A549 (cell line): ENCODE measurements at regions of chr7 and their contacts with region 1.

Region 1: GRCh38 chr7:134954197-134955082 is 31.9 kb upstream of the AGBL3 start:
- DNase-seq: peak; percentile 22 to 51
- ATAC-seq: peak in 1 of 2 experiments; percentile 66; a peak in 2 of 6 replicates
- H3K4me3 ChIP-seq: no peak overlapping the region
- H3K27ac ChIP-seq: no peak overlapping the region; a peak in 1 of 6 replicates
- H3K4me1 ChIP-seq: no peaks in the 10 kb centered on the region
- CTCF ChIP-seq: peak; percentile 86
- EP300 ChIP-seq: no peak
- POLR2A ChIP-seq: no peak
- RAD21 ChIP-seq: peak; percentile 83 to 87

Region 2: DNA sequence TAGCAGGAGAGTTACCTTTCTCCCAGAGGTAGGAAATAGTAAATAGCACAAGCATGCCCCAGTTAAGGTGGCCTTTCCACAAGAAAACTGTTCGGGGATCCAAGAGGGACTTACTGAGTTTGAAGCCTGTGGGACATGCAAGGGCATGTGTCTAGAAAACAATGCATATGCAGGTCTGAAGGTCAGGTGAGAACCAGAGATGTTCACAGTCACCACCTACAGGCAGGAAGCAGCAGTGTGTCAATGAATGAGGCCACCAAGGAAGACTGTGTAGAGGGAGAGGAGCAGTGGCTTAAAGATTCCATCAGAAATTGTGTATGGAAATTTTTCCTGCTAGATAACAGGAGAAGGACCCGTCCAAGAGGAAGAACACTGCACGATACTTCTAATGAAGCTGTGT is 109.0 kb before region 1 on chr7:
- CTCF ChIA-PET with region 1: no interaction called
- POLR2A ChIA-PET with region 1: no interaction called
- DNase-seq: peak; percentile 18 to 52
- ATAC-seq: peak; percentile 87 to 90; a peak in 5 of 6 replicates
- H3K4me3 ChIP-seq: no peak overlapping the region
- H3K27ac ChIP-seq: peak overlapping the region; percentile 32 to 39; a peak in 2 of 6 replicates
- H3K4me1 ChIP-seq: peaks cover 4% of the 10 kb centered on the region; the same call in 1 of the 3 replicates
- CTCF ChIP-seq: no peak; the same call in 2 of the 3 replicates
- EP300 ChIP-seq: no peak
- POLR2A ChIP-seq: no peak
- RAD21 ChIP-seq: peak in 1 of 2 experiments; percentile 43; a peak in 2 of 5 replicates

Region 3: DNA sequence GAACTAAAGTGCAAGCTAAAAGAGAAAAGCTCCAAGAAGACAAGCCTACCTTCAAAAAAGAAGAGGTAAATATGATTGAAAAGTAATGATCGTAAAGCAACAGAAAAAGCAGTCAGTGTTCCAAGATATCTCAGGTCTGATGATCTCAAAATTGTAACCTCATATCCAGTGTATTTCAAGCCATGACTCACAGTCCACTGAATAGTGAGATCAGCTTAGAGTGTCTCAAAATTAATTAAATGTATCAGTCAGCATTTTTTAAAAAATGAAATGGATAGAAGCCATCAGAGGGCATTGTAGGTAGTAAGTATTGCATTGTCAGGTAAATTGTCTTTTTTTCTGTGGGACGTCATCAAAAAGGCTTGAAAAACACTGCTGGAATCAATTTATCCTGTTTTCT is 18.7 kb before region 1 on chr7:
- CTCF ChIA-PET with region 1: interaction called, 10 read pairs
- POLR2A ChIA-PET with region 1: no interaction called
- DNase-seq: no peak
- ATAC-seq: no peak
- H3K4me3 ChIP-seq: no peak overlapping the region
- H3K27ac ChIP-seq: no peak overlapping the region
- H3K4me1 ChIP-seq: peaks cover 13% of the 10 kb centered on the region
- CTCF ChIP-seq: no peak
- EP300 ChIP-seq: no peak
- POLR2A ChIP-seq: no peak
- RAD21 ChIP-seq: no peak

Region 4: GRCh38 chr7:134943764-134944400 is 10.6 kb before region 1 on chr7:
- CTCF ChIA-PET with region 1: interaction called, 12 read pairs
- POLR2A ChIA-PET with region 1: no interaction called
- DNase-seq: peak; percentile 44 to 63
- ATAC-seq: peak; percentile 75 to 84; a peak in 5 of 6 replicates
- H3K4me3 ChIP-seq: no peak overlapping the region
- H3K27ac ChIP-seq: no peak overlapping the region
- H3K4me1 ChIP-seq: peaks cover 43% of the 10 kb centered on the region
- CTCF ChIP-seq: peak; percentile 76
- EP300 ChIP-seq: no peak
- POLR2A ChIP-seq: no peak
- RAD21 ChIP-seq: peak; percentile 86 to 87